ENCODE measurements at regions of chr20 and their contacts with region 1.

Region 1: GRCh38 chr20:59032023-59032712 is at the start of gene ATP5F1E:
- DNase-seq: peak; percentile 94 to 98 (median 96)
- ATAC-seq: peak; percentile 98
- H3K4me3 ChIP-seq: peak within 1 kb of the TSS; percentile 62
- H3K4me3 Mint-ChIP-seq: peak within 1 kb of the TSS; percentile 87 to 96 (median 94)
- H3K27ac ChIP-seq: peak within 1 kb of the TSS; percentile 85
- H3K27ac Mint-ChIP-seq: peak within 1 kb of the TSS; percentile 86 to 98 (median 94)
- H3K4me1 ChIP-seq: peaks cover 40 to 44% of the 10 kb centered on the region in 2 donors
- H3K4me1 Mint-ChIP-seq: peaks cover 40 to 62% (median 56%) of the 10 kb centered on the region in 7 donors
- H3K27me3 ChIP-seq: no peaks in the 10 kb centered on the region
- H3K27me3 Mint-ChIP-seq: no peaks in the 10 kb centered on the region
- total RNA-seq, gene ATP5F1E: 57.0 to 81.7 (median 67.4) TPM

Region 2: DNA sequence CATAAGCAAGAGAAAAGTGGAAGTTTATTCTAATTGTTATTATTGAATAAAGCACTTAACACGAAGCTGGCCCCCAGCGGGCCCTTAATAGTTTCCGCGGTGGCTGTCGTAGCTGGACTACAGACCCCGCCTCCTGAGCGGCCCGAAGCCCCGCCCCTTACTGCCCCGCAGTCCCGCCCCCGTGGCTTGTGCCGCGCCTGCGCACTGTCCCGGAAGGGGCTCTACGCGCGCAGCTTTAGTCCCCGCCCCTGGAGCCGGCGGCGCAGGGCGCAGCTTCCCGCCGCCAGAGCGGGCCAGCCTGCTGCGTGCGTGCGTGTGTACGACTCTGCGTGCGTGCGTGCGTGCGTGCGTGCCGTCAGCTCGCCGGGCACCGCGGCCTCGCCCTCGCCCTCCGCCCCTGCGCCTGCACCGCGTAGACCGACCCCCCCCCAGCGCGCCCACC is 643.3 kb before region 1 on chr20 and contains the start of gene VAPB:
- CTCF ChIA-PET with region 1: no interaction called
- POLR2A ChIA-PET with region 1: interaction called, 3 read pairs
- intact Hi-C with region 1: loop called in 1 of 2 experiments (anchors 5 kb)
- DNase-seq: peak; percentile 94 to 99 (median 98)
- ATAC-seq: peak; percentile 98
- H3K4me3 ChIP-seq: peak within 1 kb of the TSS; percentile 77
- H3K4me3 Mint-ChIP-seq: peak within 1 kb of the TSS; percentile 82 to 100 (median 96)
- H3K27ac ChIP-seq: peak within 1 kb of the TSS; percentile 100
- H3K27ac Mint-ChIP-seq: peak within 1 kb of the TSS; percentile 84 to 99 (median 97)
- H3K4me1 ChIP-seq: peaks cover 13 to 28% of the 10 kb centered on the region in 2 donors
- H3K4me1 Mint-ChIP-seq: peaks cover 29 to 44% (median 42%) of the 10 kb centered on the region in 7 donors
- H3K27me3 ChIP-seq: no peaks in the 10 kb centered on the region
- H3K27me3 Mint-ChIP-seq: peaks cover 0 to 11% (median 0%) of the 10 kb centered on the region in 5 donors
- total RNA-seq, gene VAPB: 23.0 to 37.0 (median 27.6) TPM

Region 3: GRCh38 chr20:58907399-58908137 is 124.6 kb before region 1 on chr20:
- CTCF ChIA-PET with region 1: no interaction called
- POLR2A ChIA-PET with region 1: interaction called, 11 read pairs
- intact Hi-C with region 1: no loop called
- DNase-seq: peak; percentile 17 to 67 (median 40)
- ATAC-seq: peak; percentile 80
- H3K4me3 ChIP-seq: peak overlapping the region; percentile 8
- H3K4me3 Mint-ChIP-seq: peak overlapping the region in 9 of 10 donors; percentile 54 to 85 (median 76)
- H3K27ac ChIP-seq: peak overlapping the region; percentile 54
- H3K27ac Mint-ChIP-seq: peak overlapping the region; percentile 79 to 95 (median 87)
- H3K4me1 ChIP-seq: peaks cover 17 to 20% of the 10 kb centered on the region in 2 donors
- H3K4me1 Mint-ChIP-seq: peaks cover 29 to 71% (median 46%) of the 10 kb centered on the region in 7 donors
- H3K27me3 ChIP-seq: no peaks in the 10 kb centered on the region
- H3K27me3 Mint-ChIP-seq: no peaks in the 10 kb centered on the region

Region 4: GRCh38 chr20:59020938-59021551 is 11.1 kb before region 1 on chr20:
- CTCF ChIA-PET with region 1: interaction called, 3 read pairs
- POLR2A ChIA-PET with region 1: interaction called, 18 read pairs
- intact Hi-C with region 1: no loop called
- DNase-seq: no peak
- ATAC-seq: no peak
- H3K4me3 ChIP-seq: no peak overlapping the region
- H3K4me3 Mint-ChIP-seq: no peak overlapping the region
- H3K27ac ChIP-seq: no peak overlapping the region
- H3K27ac Mint-ChIP-seq: peak overlapping the region in 1 of 9 donors; percentile 67
- H3K4me1 ChIP-seq: peaks cover 0 to 12% of the 10 kb centered on the region in 2 donors
- H3K4me1 Mint-ChIP-seq: peaks cover 24 to 36% (median 32%) of the 10 kb centered on the region in 7 donors
- H3K27me3 ChIP-seq: no peaks in the 10 kb centered on the region
- H3K27me3 Mint-ChIP-seq: no peaks in the 10 kb centered on the region

Region 5: DNA sequence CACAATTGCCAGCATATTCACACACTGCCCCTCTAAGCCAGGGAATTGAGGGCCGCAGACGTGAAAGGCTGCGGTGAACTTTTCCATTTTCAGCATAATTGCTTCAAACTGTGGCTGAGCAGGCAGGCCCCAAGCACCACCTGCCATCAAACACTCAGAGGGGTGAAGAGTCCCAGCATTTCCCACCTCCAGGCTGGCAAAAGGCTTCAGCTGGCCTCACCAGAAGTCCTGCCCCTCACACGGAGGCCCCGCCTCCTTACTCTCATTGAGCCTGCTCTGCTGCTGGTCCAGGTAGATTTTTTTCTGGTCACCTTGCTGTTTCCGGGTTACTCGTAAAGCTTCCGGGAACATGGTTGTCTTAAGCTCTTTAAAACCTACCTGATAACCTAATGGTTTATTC is 62.4 kb after region 1 on chr20:
- CTCF ChIA-PET with region 1: no interaction called
- POLR2A ChIA-PET with region 1: no interaction called
- intact Hi-C with region 1: no loop called
- DNase-seq: no peak
- ATAC-seq: no peak
- H3K4me3 ChIP-seq: no peak overlapping the region
- H3K4me3 Mint-ChIP-seq: no peak overlapping the region
- H3K27ac ChIP-seq: no peak overlapping the region
- H3K27ac Mint-ChIP-seq: peak overlapping the region in 1 of 9 donors; percentile 19
- H3K4me1 ChIP-seq: no peaks in the 10 kb centered on the region
- H3K4me1 Mint-ChIP-seq: peaks cover 0 to 10% (median 5%) of the 10 kb centered on the region in 7 donors
- H3K27me3 ChIP-seq: no peaks in the 10 kb centered on the region
- H3K27me3 Mint-ChIP-seq: peaks cover 0 to 12% (median 0%) of the 10 kb centered on the region in 5 donors

Region 6: GRCh38 chr20:59165891-59166709 is 133.9 kb after region 1 on chr20:
- CTCF ChIA-PET with region 1: no interaction called
- POLR2A ChIA-PET with region 1: interaction called, 10 read pairs
- intact Hi-C with region 1: loop called (anchors 1 to 2 kb)
- DNase-seq: peak in 5 of 9 donors; percentile 43 to 65 (median 50)
- ATAC-seq: peak; percentile 72
- H3K4me3 ChIP-seq: peak overlapping the region; percentile 48
- H3K4me3 Mint-ChIP-seq: peak overlapping the region; percentile 76 to 93 (median 87)
- H3K27ac ChIP-seq: peak overlapping the region; percentile 93
- H3K27ac Mint-ChIP-seq: peak overlapping the region; percentile 95 to 99 (median 98)
- H3K4me1 ChIP-seq: peaks cover 70 to 72% of the 10 kb centered on the region in 2 donors
- H3K4me1 Mint-ChIP-seq: peaks cover 68 to 97% (median 93%) of the 10 kb centered on the region in 7 donors
- H3K27me3 ChIP-seq: no peaks in the 10 kb centered on the region
- H3K27me3 Mint-ChIP-seq: no peaks in the 10 kb centered on the region

Region 7: GRCh38 chr20:59214606-59215547 is 182.7 kb after region 1 on chr20:
- CTCF ChIA-PET with region 1: no interaction called
- POLR2A ChIA-PET with region 1: no interaction called
- intact Hi-C with region 1: no loop called
- DNase-seq: no peak
- ATAC-seq: no peak
- H3K4me3 ChIP-seq: no peak overlapping the region
- H3K4me3 Mint-ChIP-seq: no peak overlapping the region
- H3K27ac ChIP-seq: no peak overlapping the region
- H3K27ac Mint-ChIP-seq: peak overlapping the region in 3 of 9 donors; percentile 8 to 37 (median 36)
- H3K4me1 ChIP-seq: no peaks in the 10 kb centered on the region
- H3K4me1 Mint-ChIP-seq: peaks cover 0 to 9% (median 4%) of the 10 kb centered on the region in 7 donors
- H3K27me3 ChIP-seq: no peaks in the 10 kb centered on the region
- H3K27me3 Mint-ChIP-seq: no peaks in the 10 kb centered on the region